ENCODE measurements at regions of chr10 and their contacts with region 1.

Region 1: GRCh38 chr10:133261726-133262325 is 14.8 kb downstream of the ADAM8 start:
- DNase-seq: peak; percentile 81 to 89 (median 89)
- H3K4me3 ChIP-seq: peak overlapping the region; percentile 33 to 79 (median 40)
- H3K4me3 Mint-ChIP-seq: peak overlapping the region; percentile 46 to 56
- H3K27ac ChIP-seq: peak overlapping the region; percentile 77 to 91
- H3K27ac Mint-ChIP-seq: peak overlapping the region; percentile 68 to 99 (median 96)
- H3K4me1 ChIP-seq: peaks cover 84 to 92% of the 10 kb centered on the region in 2 donors
- H3K4me1 Mint-ChIP-seq: peaks cover 79% of the 10 kb centered on the region
- H3K27me3 ChIP-seq: no peaks in the 10 kb centered on the region
- H3K27me3 Mint-ChIP-seq: peaks cover 0 to 6% (median 1%) of the 10 kb centered on the region in 3 donors
- CTCF ChIP-seq: no peak

Region 2: DNA sequence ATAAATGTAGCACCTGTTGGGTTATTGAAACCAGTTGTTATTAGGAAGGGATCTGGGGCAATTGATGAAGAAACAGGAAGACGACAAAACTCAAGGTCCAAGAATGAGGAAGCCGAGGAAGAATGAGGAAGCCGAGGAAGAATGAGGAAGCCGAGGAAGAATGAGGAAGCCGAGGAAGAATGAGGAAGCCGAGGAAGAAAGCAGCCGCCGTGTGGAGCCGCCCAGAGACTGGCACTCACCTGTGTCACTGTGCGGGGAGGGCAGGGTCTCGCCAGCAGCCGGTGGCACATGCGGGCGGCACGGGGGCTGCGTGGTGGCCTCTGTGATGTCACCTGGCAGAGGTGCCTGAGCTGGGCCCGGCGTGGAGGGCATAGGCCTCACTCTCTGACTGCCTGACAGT is 248.4 kb before region 1 on chr10:
- intact Hi-C with region 1: loop called in 1 of 2 experiments (anchors 5 kb)
- DNase-seq: peak; percentile 83 to 88 (median 85)
- H3K4me3 ChIP-seq: peak overlapping the region in 1 of 3 experiments; percentile 57
- H3K4me3 Mint-ChIP-seq: peak overlapping the region; percentile 13 to 50
- H3K27ac ChIP-seq: peak overlapping the region; percentile 97 to 98
- H3K27ac Mint-ChIP-seq: peak overlapping the region in 2 of 7 donors; percentile 68 to 97
- H3K4me1 ChIP-seq: peaks cover 54 to 62% of the 10 kb centered on the region in 2 donors
- H3K4me1 Mint-ChIP-seq: peaks cover 41% of the 10 kb centered on the region
- H3K27me3 ChIP-seq: no peaks in the 10 kb centered on the region
- H3K27me3 Mint-ChIP-seq: peaks cover 0 to 5% (median 2%) of the 10 kb centered on the region in 3 donors
- CTCF ChIP-seq: no peak

Region 3: GRCh38 chr10:133044401-133044804 is 217.4 kb before region 1 on chr10:
- intact Hi-C with region 1: no loop called
- DNase-seq: no peak
- H3K4me3 ChIP-seq: no peak overlapping the region
- H3K4me3 Mint-ChIP-seq: no peak overlapping the region
- H3K27ac ChIP-seq: no peak overlapping the region
- H3K27ac Mint-ChIP-seq: no peak overlapping the region
- H3K4me1 ChIP-seq: no peaks in the 10 kb centered on the region
- H3K4me1 Mint-ChIP-seq: no peaks in the 10 kb centered on the region
- H3K27me3 ChIP-seq: peaks cover 0 to 3% of the 10 kb centered on the region in 2 donors
- H3K27me3 Mint-ChIP-seq: peaks cover 11 to 20% (median 12%) of the 10 kb centered on the region in 3 donors
- CTCF ChIP-seq: no peak

Region 4: GRCh38 chr10:133110133-133110532 is 151.7 kb before region 1 on chr10:
- intact Hi-C with region 1: no loop called
- DNase-seq: no peak
- H3K4me3 ChIP-seq: no peak overlapping the region
- H3K4me3 Mint-ChIP-seq: no peak overlapping the region
- H3K27ac ChIP-seq: no peak overlapping the region
- H3K27ac Mint-ChIP-seq: no peak overlapping the region
- H3K4me1 ChIP-seq: no peaks in the 10 kb centered on the region
- H3K4me1 Mint-ChIP-seq: no peaks in the 10 kb centered on the region
- H3K27me3 ChIP-seq: no peaks in the 10 kb centered on the region
- H3K27me3 Mint-ChIP-seq: peaks cover 6 to 10% (median 9%) of the 10 kb centered on the region in 3 donors
- CTCF ChIP-seq: no peak

Region 5: GRCh38 chr10:133139551-133140065 is 122.2 kb before region 1 on chr10:
- intact Hi-C with region 1: loop called in 1 of 2 experiments (anchors 10 kb)
- DNase-seq: no peak
- H3K4me3 ChIP-seq: no peak overlapping the region
- H3K4me3 Mint-ChIP-seq: no peak overlapping the region
- H3K27ac ChIP-seq: no peak overlapping the region
- H3K27ac Mint-ChIP-seq: no peak overlapping the region
- H3K4me1 ChIP-seq: no peaks in the 10 kb centered on the region
- H3K4me1 Mint-ChIP-seq: peaks cover 6% of the 10 kb centered on the region
- H3K27me3 ChIP-seq: no peaks in the 10 kb centered on the region
- H3K27me3 Mint-ChIP-seq: peaks cover 2 to 10% (median 6%) of the 10 kb centered on the region in 3 donors
- CTCF ChIP-seq: no peak

Region 6: DNA sequence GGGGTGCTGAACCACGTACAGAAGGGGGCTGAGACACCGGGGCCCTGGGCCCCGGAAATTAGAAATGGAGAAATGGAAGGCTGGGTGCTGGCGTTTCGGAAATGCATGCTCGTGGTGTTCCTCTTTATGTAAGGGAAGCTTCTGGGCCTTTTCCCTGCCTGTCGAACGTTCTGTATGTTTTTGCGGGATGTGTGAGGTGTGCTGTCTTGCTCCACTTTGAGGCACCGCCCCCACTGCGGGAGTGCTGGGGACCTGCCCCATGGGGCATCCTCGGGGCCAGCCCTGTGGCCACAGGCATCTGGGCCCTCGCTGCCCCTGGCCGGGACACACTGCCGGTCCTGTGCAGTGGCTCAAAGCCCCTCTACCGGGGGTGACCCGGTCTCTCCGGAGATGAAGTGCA is 25.9 kb before region 1 on chr10:
- intact Hi-C with region 1: loop called in 1 of 2 experiments (anchors 2 kb)
- DNase-seq: peak; percentile 61 to 78 (median 75)
- H3K4me3 ChIP-seq: peak overlapping the region; percentile 40 to 76 (median 55)
- H3K4me3 Mint-ChIP-seq: peak overlapping the region; percentile 76 to 81
- H3K27ac ChIP-seq: peak overlapping the region; percentile 89 to 92
- H3K27ac Mint-ChIP-seq: peak overlapping the region; percentile 88 to 97 (median 94)
- H3K4me1 ChIP-seq: peaks cover 51 to 66% of the 10 kb centered on the region in 2 donors
- H3K4me1 Mint-ChIP-seq: peaks cover 28% of the 10 kb centered on the region
- H3K27me3 ChIP-seq: peaks cover 6 to 55% of the 10 kb centered on the region in 2 donors
- H3K27me3 Mint-ChIP-seq: peaks cover 44 to 78% (median 58%) of the 10 kb centered on the region in 3 donors
- CTCF ChIP-seq: no peak

Region 7: GRCh38 chr10:133278577-133279265 is 16.9 kb after region 1 on chr10:
- intact Hi-C with region 1: loop called (anchors 2 kb)
- DNase-seq: peak; percentile 96 to 98 (median 97)
- H3K4me3 ChIP-seq: peak overlapping the region in 2 of 3 experiments; percentile 21 to 94
- H3K4me3 Mint-ChIP-seq: peak overlapping the region; percentile 83 to 91
- H3K27ac ChIP-seq: peak overlapping the region; percentile 96 to 99
- H3K27ac Mint-ChIP-seq: peak overlapping the region; percentile 99 to 100 (median 100)
- H3K4me1 ChIP-seq: peaks cover 73 to 78% of the 10 kb centered on the region in 2 donors
- H3K4me1 Mint-ChIP-seq: peaks cover 57% of the 10 kb centered on the region
- H3K27me3 ChIP-seq: no peaks in the 10 kb centered on the region
- H3K27me3 Mint-ChIP-seq: peaks cover 0 to 14% (median 2%) of the 10 kb centered on the region in 3 donors
- CTCF ChIP-seq: no peak

Region 8: DNA sequence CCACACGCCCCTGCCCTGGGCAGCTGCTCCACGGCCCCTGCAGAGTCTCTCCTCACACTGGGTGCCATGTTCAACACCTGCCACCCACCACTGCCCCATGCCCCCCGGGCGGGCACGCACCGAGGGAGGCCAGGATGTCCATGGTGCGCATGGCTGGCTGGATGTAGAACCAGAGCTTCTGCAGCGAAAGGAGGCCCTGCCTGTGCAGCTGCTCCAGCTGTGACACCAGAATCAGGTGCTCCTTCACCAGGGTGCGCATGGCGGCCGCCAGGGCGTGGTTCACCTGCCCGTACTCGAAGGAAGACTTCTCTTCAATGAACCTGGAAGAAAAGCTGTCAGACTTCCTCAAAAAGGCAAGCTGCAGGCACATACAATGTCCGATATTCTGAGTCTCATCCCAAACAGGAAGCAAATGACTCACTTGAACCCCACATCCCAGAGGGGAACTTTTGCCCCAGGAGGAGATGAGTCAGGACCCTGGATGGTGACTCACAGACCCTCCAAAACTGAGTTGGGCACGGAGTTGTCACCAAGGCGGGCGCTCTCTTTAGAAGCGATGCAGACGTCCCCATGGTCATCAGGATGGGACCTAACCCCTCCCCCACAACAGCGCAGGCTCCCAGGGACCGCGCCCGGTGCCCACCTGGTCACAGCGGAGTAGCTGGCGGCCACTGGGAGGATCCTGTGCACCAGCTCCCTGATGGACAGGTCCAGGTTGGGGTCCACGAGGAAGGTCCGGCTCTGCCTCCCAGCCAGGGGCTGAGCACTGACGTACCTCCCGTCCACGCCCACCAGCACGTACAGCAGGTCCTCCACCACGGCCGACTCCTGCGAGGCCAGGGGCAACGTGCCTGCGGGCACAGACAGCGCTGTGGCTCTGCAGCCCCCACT is 31.3 kb after region 1 on chr10:
- intact Hi-C with region 1: loop called (anchors 1 to 5 kb)
- DNase-seq: peak; percentile 96 to 99 (median 96)
- H3K4me3 ChIP-seq: peak overlapping the region in 1 of 3 experiments; percentile 30
- H3K4me3 Mint-ChIP-seq: peak overlapping the region in 1 of 2 donors; percentile 21
- H3K27ac ChIP-seq: peak overlapping the region; percentile 84 to 95
- H3K27ac Mint-ChIP-seq: peak overlapping the region; percentile 90 to 96 (median 95)
- H3K4me1 ChIP-seq: peaks cover 25 to 33% of the 10 kb centered on the region in 2 donors
- H3K4me1 Mint-ChIP-seq: peaks cover 25% of the 10 kb centered on the region
- H3K27me3 ChIP-seq: no peaks in the 10 kb centered on the region
- H3K27me3 Mint-ChIP-seq: peaks cover 0 to 4% (median 0%) of the 10 kb centered on the region in 3 donors
- CTCF ChIP-seq: no peak

Region 9: GRCh38 chr10:133309111-133309719 is 47.4 kb after region 1 on chr10:
- intact Hi-C with region 1: loop called (anchors 5 kb)
- DNase-seq: peak; percentile 85 to 92 (median 88)
- H3K4me3 ChIP-seq: peak overlapping the region; percentile 77 to 87 (median 86)
- H3K4me3 Mint-ChIP-seq: peak overlapping the region; percentile 58 to 76
- H3K27ac ChIP-seq: peak overlapping the region; percentile 95 to 96
- H3K27ac Mint-ChIP-seq: peak overlapping the region; percentile 28 to 100 (median 90)
- H3K4me1 ChIP-seq: peaks cover 37 to 42% of the 10 kb centered on the region in 2 donors
- H3K4me1 Mint-ChIP-seq: peaks cover 35% of the 10 kb centered on the region
- H3K27me3 ChIP-seq: no peaks in the 10 kb centered on the region
- H3K27me3 Mint-ChIP-seq: peaks cover 0 to 5% (median 0%) of the 10 kb centered on the region in 3 donors
- CTCF ChIP-seq: no peak